Posterior vena cava (tissue), 2 donors: ENCODE measurements at regions of chr9 and their contacts with region 1.

Region 1: GRCh38 chr9:78267889-78268288 is 29.0 kb upstream of the PSAT1 start:
- DNase-seq: no peak

Region 2: GRCh38 chr9:78295731-78296130 is 27.8 kb after region 1 on chr9:
- intact Hi-C with region 1: loop called in 1 of 2 experiments (anchors 1 kb)
- DNase-seq: no peak